ENCODE measurements at regions of chr9 and their contacts with region 1.

Region 1: GRCh38 chr9:133742849-133743444 is 4.8 kb upstream of the SARDH start:
- DNase-seq: peak; percentile 82
- ATAC-seq: peak; percentile 91
- H3K4me3 ChIP-seq: no peak overlapping the region
- H3K4me3 Mint-ChIP-seq: no peak overlapping the region
- H3K27ac ChIP-seq: no peak overlapping the region
- H3K27ac Mint-ChIP-seq: no peak overlapping the region
- H3K4me1 ChIP-seq: peaks cover 8 to 11% of the 10 kb centered on the region in 2 donors
- H3K4me1 Mint-ChIP-seq: peaks cover 4% of the 10 kb centered on the region
- H3K27me3 ChIP-seq: peaks cover 0 to 8% (median 2%) of the 10 kb centered on the region in 4 experiments
- H3K27me3 Mint-ChIP-seq: peaks cover 33% of the 10 kb centered on the region
- CTCF ChIP-seq: peak; percentile 97

Region 2: DNA sequence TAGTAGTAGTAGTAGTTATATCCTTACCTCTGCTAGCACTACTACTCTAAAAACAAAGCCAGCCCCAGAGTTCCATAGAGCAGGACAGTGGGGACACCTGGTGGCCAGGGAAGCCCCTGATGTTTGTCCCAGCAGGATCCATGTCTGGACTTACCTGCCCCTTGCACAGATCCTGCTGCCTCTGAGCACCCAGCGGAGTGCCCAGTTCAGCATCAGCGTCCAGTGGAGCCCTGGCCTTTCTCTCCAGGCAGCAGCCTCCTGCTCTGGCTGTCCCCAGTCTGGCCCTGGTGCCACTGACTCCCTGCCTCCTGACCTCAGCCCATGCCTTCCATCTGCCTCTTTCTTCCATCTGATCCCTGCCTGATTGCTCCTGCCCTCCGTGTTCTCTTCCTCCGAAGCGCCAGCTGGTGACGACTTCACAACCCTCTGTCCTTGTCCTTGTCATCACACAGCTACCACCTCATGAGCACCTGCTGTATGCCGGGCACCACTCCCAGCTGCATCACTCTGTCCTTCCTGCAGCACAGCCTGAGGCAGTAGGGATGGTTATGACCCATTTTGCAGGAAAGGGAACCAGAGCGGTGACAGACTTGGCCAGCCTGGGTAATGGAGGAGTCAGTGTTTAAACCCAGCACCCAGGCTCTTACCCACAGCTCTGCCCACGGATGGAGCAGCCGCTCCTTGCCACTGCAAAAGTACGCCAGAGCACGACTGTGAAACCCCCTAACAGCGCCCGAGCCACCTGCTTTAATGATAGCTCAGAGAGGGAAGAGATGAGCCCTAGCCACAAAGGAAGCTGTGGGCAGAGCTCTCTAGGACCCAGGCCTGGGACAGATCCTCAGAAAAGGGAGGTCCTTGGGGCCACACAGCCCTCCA is 16.3 kb before region 1 on chr9:
- CTCF ChIA-PET with region 1: interaction called, 17 read pairs
- POLR2A ChIA-PET with region 1: no interaction called
- intact Hi-C with region 1: no loop called
- DNase-seq: no peak
- ATAC-seq: no peak
- H3K4me3 ChIP-seq: no peak overlapping the region
- H3K4me3 Mint-ChIP-seq: no peak overlapping the region
- H3K27ac ChIP-seq: no peak overlapping the region
- H3K27ac Mint-ChIP-seq: peak overlapping the region; percentile 7
- H3K4me1 ChIP-seq: no peaks in the 10 kb centered on the region
- H3K4me1 Mint-ChIP-seq: peaks cover 7% of the 10 kb centered on the region
- H3K27me3 ChIP-seq: peaks cover 0 to 27% (median 8%) of the 10 kb centered on the region in 4 experiments
- H3K27me3 Mint-ChIP-seq: peaks cover 33% of the 10 kb centered on the region
- CTCF ChIP-seq: peak; percentile 39

Region 3: DNA sequence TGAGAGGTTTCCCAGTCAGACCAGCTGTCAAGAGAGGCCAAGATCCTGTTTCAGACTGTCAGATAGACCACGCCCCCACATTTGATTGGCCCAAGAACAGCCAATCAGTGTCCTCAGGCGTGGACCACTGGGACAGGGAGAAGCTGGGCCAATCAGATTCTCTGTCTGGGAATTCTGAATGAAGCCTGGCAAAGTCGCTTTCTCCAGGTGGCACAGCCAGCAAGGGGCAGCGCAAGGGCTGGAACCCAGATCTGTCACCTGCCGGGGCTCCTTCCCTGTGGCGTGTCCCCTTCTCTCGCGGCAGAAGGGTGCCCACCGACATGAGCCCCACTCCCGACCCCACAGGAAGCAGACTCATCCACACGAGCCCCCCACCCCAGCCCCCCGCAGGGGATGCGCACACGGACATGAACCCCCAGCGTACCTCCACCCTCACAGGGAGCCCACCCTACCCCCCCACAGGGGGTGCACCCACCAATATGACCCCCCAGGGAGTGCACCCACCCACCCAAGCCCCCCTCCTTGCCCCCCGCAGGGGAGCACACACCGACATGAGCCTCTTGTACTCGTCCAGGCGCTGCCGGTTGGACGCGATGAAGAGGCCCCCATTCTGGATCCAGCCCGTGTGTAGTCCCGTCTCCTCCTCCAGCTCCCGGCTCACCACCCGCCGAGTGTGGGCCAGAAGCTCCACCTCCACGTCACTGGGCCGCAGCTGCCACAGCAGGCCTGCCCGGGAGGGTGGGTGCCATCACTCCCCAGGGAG is 10.9 kb before region 1 on chr9:
- CTCF ChIA-PET with region 1: interaction called, 17 read pairs
- POLR2A ChIA-PET with region 1: no interaction called
- intact Hi-C with region 1: no loop called
- DNase-seq: no peak
- ATAC-seq: no peak
- H3K4me3 ChIP-seq: no peak overlapping the region
- H3K4me3 Mint-ChIP-seq: no peak overlapping the region
- H3K27ac ChIP-seq: no peak overlapping the region
- H3K27ac Mint-ChIP-seq: no peak overlapping the region
- H3K4me1 ChIP-seq: peaks cover 17 to 20% of the 10 kb centered on the region in 2 donors
- H3K4me1 Mint-ChIP-seq: peaks cover 31% of the 10 kb centered on the region
- H3K27me3 ChIP-seq: peaks cover 0 to 12% (median under 1%) of the 10 kb centered on the region in 4 experiments
- H3K27me3 Mint-ChIP-seq: peaks cover 12% of the 10 kb centered on the region
- CTCF ChIP-seq: no peak